Head of caudate nucleus (tissue), 42 donors: ENCODE measurements at regions of chr14 and their contacts with region 1.

Region 1: GRCh38 chr14:67240978-67241414 is 239 bp upstream of the PALS1 start:
- DNase-seq: peak; percentile 88 to 98 (median 97)

Region 2: GRCh38 chr14:66507722-66508546 is 733.1 kb before region 1 on chr14 and contains the start of gene GPHN:
- intact Hi-C with region 1: loop called (anchors 5 kb)
- DNase-seq: peak; percentile 93 to 99 (median 96)

Region 3: DNA sequence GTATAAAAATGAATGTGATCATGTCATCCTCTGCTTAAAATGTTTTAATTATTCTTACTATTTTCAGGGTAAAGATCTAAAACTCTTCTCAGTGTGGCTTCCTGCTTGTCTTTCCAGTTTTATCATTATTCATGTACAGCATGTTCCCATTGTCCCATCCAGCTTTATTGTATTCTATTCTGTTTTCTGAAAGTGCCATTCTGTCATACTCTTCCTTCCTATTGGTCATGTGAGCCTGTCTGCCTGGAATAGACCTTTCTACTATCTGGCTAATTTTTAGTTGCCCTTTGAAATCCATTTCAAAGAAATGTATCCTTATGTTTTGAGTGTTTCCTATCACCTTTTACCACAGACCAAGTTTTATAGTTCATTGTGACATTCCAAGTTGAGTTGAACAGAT is 35.1 kb after region 1 on chr14:
- intact Hi-C with region 1: loop called (anchors 5 kb)
- DNase-seq: no peak

Region 4: GRCh38 chr14:67359775-67360648 is 119.0 kb after region 1 on chr14 and contains the starts of genes ATP6V1D and EIF2S1:
- intact Hi-C with region 1: loop called (anchors 5 kb)
- DNase-seq: peak; percentile 97 to 100 (median 99)